Sigmoid colon (tissue), 7 donors: ENCODE measurements at regions of chr14 and their contacts with region 1.

Region 1: GRCh38 chr14:69129264-69129880 is 23.5 kb downstream of the DCAF5 start:
- DNase-seq: peak; percentile 89
- H3K4me3 ChIP-seq: no peak overlapping the region
- H3K27ac ChIP-seq: peak overlapping the region; percentile 63 to 79 (median 69)
- H3K4me1 ChIP-seq: peaks cover 0 to 83% (median 54%) of the 10 kb centered on the region in 4 donors
- H3K27me3 ChIP-seq: no peaks in the 10 kb centered on the region
- CTCF ChIP-seq: peak; percentile 76 to 87 (median 82)
- EP300 ChIP-seq: no peak
- POLR2A ChIP-seq: no peak

Region 2: GRCh38 chr14:67908052-67908754 is 1221.2 kb before region 1 on chr14:
- intact Hi-C with region 1: loop called (anchors 10 kb)
- DNase-seq: no peak
- H3K4me3 ChIP-seq: no peak overlapping the region
- H3K27ac ChIP-seq: no peak overlapping the region
- H3K4me1 ChIP-seq: no peaks in the 10 kb centered on the region
- H3K27me3 ChIP-seq: no peaks in the 10 kb centered on the region
- CTCF ChIP-seq: no peak
- EP300 ChIP-seq: no peak
- POLR2A ChIP-seq: no peak

Region 3: GRCh38 chr14:68854421-68854820 is 275.0 kb before region 1 on chr14:
- intact Hi-C with region 1: no loop called
- DNase-seq: no peak
- H3K4me3 ChIP-seq: no peak overlapping the region
- H3K27ac ChIP-seq: peak overlapping the region in 2 of 4 donors; percentile 66 to 71
- H3K4me1 ChIP-seq: peaks cover 0 to 29% (median 8%) of the 10 kb centered on the region in 4 donors
- H3K27me3 ChIP-seq: no peaks in the 10 kb centered on the region
- CTCF ChIP-seq: no peak
- EP300 ChIP-seq: no peak
- POLR2A ChIP-seq: no peak

Region 4: DNA sequence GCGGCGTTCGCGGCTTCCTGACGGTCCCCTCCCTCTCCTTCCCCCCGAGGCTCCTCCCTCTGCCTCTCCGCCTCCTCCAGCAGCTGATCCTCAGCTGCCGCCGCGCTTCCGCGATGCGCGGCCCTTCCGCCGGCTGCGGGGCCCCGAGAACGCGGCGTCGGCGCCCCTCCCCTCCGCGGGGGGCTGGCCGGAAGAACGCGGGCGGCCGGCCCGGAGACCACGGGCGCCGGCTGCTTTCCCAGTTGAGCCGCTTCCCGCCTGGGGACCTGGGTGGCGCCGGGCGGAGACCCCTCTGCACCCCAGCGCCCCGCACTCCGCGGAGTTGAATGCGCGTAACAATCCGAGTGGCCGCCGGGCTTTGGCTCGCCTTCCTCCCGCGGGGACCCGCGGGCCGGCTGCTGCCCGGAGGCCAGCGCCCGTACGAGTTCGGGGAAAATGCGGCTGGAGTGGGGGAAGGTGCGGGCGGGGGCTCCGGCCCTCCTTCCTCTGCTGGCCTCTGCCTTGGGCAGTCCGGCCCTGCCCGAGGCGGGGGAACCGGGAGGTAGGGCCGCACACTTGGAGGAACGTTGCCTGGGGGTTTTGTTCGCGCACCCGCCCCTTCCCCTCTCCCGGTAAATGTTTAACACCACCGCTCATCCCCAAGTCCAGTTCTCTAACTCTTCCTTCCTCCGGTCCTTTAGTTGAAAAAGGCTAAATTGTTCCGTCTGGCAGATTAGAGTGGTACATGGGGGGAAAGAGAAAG is 23.9 kb after region 1 on chr14:
- intact Hi-C with region 1: loop called (anchors 2 kb)
- DNase-seq: peak; percentile 98
- H3K4me3 ChIP-seq: peak overlapping the region; percentile 72 to 93 (median 84)
- H3K27ac ChIP-seq: peak overlapping the region; percentile 96 to 99 (median 98)
- H3K4me1 ChIP-seq: peaks cover 0 to 40% (median 23%) of the 10 kb centered on the region in 4 donors
- H3K27me3 ChIP-seq: no peaks in the 10 kb centered on the region
- CTCF ChIP-seq: peak in 1 of 4 experiments; percentile 12
- EP300 ChIP-seq: peak in 1 of 4 donors; percentile 24
- POLR2A ChIP-seq: no peak

Region 5: GRCh38 chr14:69191340-69192111 is 62.2 kb after region 1 on chr14 and contains the start of gene EXD2:
- intact Hi-C with region 1: loop called (anchors 2 kb)
- DNase-seq: peak; percentile 94
- H3K4me3 ChIP-seq: peak within 1 kb of the TSS; percentile 69 to 90 (median 85)
- H3K27ac ChIP-seq: peak within 1 kb of the TSS; percentile 74 to 81 (median 80)
- H3K4me1 ChIP-seq: peaks cover 0 to 12% (median 5%) of the 10 kb centered on the region in 4 donors
- H3K27me3 ChIP-seq: no peaks in the 10 kb centered on the region
- CTCF ChIP-seq: no peak
- EP300 ChIP-seq: no peak
- POLR2A ChIP-seq: peak in 1 of 2 donors; percentile 7
- total RNA-seq, gene EXD2: 14.7 to 18.0 (median 16.8) TPM